CD4-positive, alpha-beta T cell (primary cell): ENCODE measurements at regions of chr11 and their contacts with region 1.

Region 1: DNA sequence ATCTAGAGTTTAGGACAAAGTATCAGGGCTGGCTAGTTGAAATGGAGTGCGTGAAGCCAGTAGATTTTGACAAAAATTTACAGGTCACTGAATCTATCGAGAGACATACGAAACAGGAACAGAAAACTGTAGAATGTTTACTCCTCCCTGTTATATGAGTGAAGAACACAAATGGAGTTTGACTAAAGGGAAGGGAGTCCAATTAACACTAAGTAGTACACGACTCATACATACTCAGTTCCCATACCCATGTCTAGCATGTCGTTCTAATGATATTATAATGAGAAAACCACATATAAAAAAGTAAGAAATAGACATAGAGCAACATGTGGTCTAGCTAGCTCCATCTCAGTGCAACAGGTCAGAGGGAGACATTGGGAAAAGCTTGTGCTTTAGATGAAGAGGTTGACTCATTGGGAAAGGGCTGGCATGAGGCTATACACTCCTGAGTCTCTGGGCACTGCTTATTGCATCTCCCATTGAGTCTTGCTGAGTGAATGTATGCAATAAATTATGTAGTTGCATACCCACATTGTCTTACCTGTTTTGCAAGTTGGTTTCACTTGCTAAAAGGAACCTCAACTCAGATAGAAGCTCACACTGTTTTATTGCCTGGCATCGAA is 43.5 kb downstream of the CD44 start:
- DNase-seq: no peak
- ATAC-seq: no peak
- H3K4me3 ChIP-seq: no peak overlapping the region
- H3K4me3 Mint-ChIP-seq: peak overlapping the region; percentile 69
- H3K27ac ChIP-seq: peak overlapping the region in 1 of 2 donors; percentile 24
- H3K27ac Mint-ChIP-seq: peak overlapping the region; percentile 80
- H3K4me1 ChIP-seq: peaks cover 56% of the 10 kb centered on the region
- H3K4me1 Mint-ChIP-seq: peaks cover 97% of the 10 kb centered on the region
- H3K27me3 ChIP-seq: no peaks in the 10 kb centered on the region
- H3K27me3 Mint-ChIP-seq: no peaks in the 10 kb centered on the region
- CTCF ChIP-seq: no peak

Region 2: DNA sequence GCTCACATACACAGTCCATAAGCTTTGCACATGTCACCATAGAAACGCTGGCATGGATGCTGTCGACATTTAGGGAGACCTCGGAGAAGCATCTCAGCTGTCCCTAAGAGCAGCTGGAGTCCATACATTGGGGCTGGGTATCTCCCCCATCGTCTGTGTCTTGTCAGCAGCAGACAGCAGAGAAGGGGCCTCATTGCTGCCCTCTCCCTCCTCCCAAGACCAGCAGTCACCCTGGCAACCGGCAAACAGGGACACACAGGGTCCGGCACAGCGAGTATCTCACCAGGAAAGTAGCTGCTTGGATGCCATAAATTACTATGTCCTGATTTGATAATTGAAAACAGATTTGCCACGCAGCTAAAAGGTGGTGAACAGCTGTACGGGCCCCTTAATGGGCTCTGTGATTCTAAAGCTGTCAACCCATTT is 41.0 kb after region 1 on chr11:
- CTCF ChIA-PET with region 1: no interaction called
- POLR2A ChIA-PET with region 1: no interaction called
- intact Hi-C with region 1: loop called (anchors 5 kb)
- DNase-seq: no peak
- ATAC-seq: no peak
- H3K4me3 ChIP-seq: no peak overlapping the region
- H3K4me3 Mint-ChIP-seq: no peak overlapping the region
- H3K27ac ChIP-seq: peak overlapping the region in 1 of 2 donors; percentile 25
- H3K27ac Mint-ChIP-seq: peak overlapping the region; percentile 68
- H3K4me1 ChIP-seq: peaks cover 8% of the 10 kb centered on the region
- H3K4me1 Mint-ChIP-seq: peaks cover 52% of the 10 kb centered on the region
- H3K27me3 ChIP-seq: no peaks in the 10 kb centered on the region
- H3K27me3 Mint-ChIP-seq: no peaks in the 10 kb centered on the region
- CTCF ChIP-seq: no peak